ENCODE measurements at regions of chr17 and their contacts with region 1.

Region 1: GRCh38 chr17:21043286-21044232 is 748 bp upstream of the USP22 start:
- DNase-seq: peak; percentile 92
- ATAC-seq: peak; percentile 78
- H3K4me3 Mint-ChIP-seq: peak overlapping the region; percentile 74
- H3K27ac Mint-ChIP-seq: peak overlapping the region; percentile 89
- H3K4me1 Mint-ChIP-seq: peaks cover 37% of the 10 kb centered on the region
- H3K27me3 Mint-ChIP-seq: no peaks in the 10 kb centered on the region
- CTCF ChIP-seq: peak; percentile 21

Region 2: DNA sequence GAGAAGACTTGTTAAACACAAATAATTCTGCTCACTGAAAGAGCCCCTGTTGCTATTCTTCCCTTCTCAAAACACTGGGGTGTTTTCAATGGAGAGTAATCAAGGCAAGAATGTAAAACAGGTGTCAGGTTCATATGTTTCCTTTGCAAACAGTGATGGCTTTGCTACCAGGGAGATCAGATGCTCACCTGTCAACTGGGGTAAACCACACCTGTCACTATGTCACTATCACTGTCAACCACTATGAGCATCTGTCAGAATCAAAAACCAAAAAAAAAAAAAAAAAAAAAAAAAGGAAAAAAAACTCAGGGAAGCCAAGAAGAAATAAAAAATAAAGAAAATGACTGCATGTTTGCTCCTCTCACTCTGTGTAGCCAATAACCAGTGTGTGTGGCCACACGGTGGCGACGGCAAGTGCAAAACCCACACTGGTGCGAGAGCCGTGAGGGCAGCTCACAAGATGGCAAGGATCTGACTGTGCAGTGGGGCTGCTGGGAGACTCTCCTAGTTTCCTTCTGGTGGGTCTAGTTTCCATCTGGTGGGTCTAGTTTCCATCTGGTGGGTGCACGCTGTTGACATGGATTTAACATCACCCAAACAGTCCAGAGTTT is 23.5 kb before region 1 on chr17:
- CTCF ChIA-PET with region 1: interaction called, 9 read pairs
- POLR2A ChIA-PET with region 1: interaction called, 8 read pairs
- intact Hi-C with region 1: loop called (anchors 1 kb)
- DNase-seq: no peak
- ATAC-seq: peak; percentile 79
- H3K4me3 Mint-ChIP-seq: peak overlapping the region; percentile 17
- H3K27ac Mint-ChIP-seq: peak overlapping the region; percentile 81
- H3K4me1 Mint-ChIP-seq: peaks cover 42% of the 10 kb centered on the region
- H3K27me3 Mint-ChIP-seq: no peaks in the 10 kb centered on the region
- CTCF ChIP-seq: no peak

Region 3: DNA sequence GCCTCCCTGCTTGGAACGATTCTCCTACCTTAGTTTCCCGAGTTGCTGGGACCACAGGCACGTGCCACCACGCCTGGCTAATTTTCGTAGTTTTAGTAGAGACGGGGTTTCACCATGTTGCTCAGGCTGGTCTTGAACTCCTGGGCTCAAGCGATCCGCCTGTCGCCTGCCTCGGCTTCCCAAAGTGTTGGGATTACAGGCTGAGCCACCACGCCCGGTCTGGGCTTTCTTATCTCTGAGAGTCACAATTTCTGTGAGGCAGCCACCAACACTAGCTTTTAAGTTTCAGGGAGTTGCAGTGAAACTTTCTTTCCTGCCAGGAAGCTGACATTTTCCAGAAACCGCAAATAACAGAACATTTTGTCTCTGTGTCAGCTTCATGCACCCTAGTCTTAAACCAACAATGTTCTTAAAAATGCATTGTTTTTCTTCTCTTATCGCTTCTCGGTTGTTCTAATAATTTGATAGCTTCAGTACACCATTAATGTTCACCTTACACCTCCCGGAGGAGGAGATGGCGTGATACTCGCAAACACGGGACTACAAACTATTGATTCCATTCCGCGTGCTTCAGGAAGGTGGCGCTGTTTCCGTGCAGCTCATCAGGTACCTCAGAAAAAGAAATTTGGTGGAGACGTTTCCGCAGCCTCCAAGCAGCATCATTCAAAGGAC is 75.8 kb after region 1 on chr17:
- CTCF ChIA-PET with region 1: interaction called, 5 read pairs
- POLR2A ChIA-PET with region 1: interaction called, 4 read pairs
- intact Hi-C with region 1: loop called (anchors 1 kb)
- DNase-seq: peak; percentile 41
- ATAC-seq: peak; percentile 93
- H3K4me3 Mint-ChIP-seq: no peak overlapping the region
- H3K27ac Mint-ChIP-seq: no peak overlapping the region
- H3K4me1 Mint-ChIP-seq: peaks cover 6% of the 10 kb centered on the region
- H3K27me3 Mint-ChIP-seq: peaks cover 9% of the 10 kb centered on the region
- CTCF ChIP-seq: no peak

Region 4: GRCh38 chr17:21252796-21253645 is 209.5 kb after region 1 on chr17 and contains the start of gene NATD1:
- CTCF ChIA-PET with region 1: no interaction called
- POLR2A ChIA-PET with region 1: interaction called, 3 read pairs
- intact Hi-C with region 1: loop called (anchors 1 kb)
- DNase-seq: peak; percentile 65
- ATAC-seq: peak; percentile 78
- H3K4me3 Mint-ChIP-seq: peak within 1 kb of the TSS; percentile 82
- H3K27ac Mint-ChIP-seq: peak within 1 kb of the TSS; percentile 76
- H3K4me1 Mint-ChIP-seq: peaks cover 21% of the 10 kb centered on the region
- H3K27me3 Mint-ChIP-seq: no peaks in the 10 kb centered on the region
- CTCF ChIP-seq: no peak
- total RNA-seq, gene NATD1: 1.5 and 1.7 TPM in 2 replicates

Region 5: GRCh38 chr17:21457051-21458026 is 413.8 kb after region 1 on chr17:
- CTCF ChIA-PET with region 1: no interaction called
- POLR2A ChIA-PET with region 1: no interaction called
- intact Hi-C with region 1: loop called (anchors 5 kb)
- DNase-seq: peak; percentile 78
- ATAC-seq: peak; percentile 93
- H3K4me3 Mint-ChIP-seq: no peak overlapping the region
- H3K27ac Mint-ChIP-seq: no peak overlapping the region
- H3K4me1 Mint-ChIP-seq: peaks cover 7% of the 10 kb centered on the region
- H3K27me3 Mint-ChIP-seq: peaks cover 27% of the 10 kb centered on the region
- CTCF ChIP-seq: peak; percentile 69